Sigmoid colon (tissue), 7 donors: ENCODE measurements at regions of chr4 and their contacts with region 1.

Region 1: GRCh38 chr4:158850800-158851644 is 82.2 kb downstream of the FNIP2 start:
- DNase-seq: no peak
- H3K4me3 ChIP-seq: no peak overlapping the region
- H3K27ac ChIP-seq: no peak overlapping the region
- H3K4me1 ChIP-seq: peaks cover 0 to 7% (median 2%) of the 10 kb centered on the region in 4 donors
- H3K27me3 ChIP-seq: no peaks in the 10 kb centered on the region
- CTCF ChIP-seq: peak; percentile 37 to 68 (median 59)
- EP300 ChIP-seq: no peak
- POLR2A ChIP-seq: no peak

Region 2: GRCh38 chr4:158729716-158730559 is 121.1 kb before region 1 on chr4:
- intact Hi-C with region 1: loop called (anchors 1 kb)
- DNase-seq: peak; percentile 77
- H3K4me3 ChIP-seq: no peak overlapping the region
- H3K27ac ChIP-seq: no peak overlapping the region
- H3K4me1 ChIP-seq: peaks cover 0 to 4% (median 0%) of the 10 kb centered on the region in 4 donors
- H3K27me3 ChIP-seq: no peaks in the 10 kb centered on the region
- CTCF ChIP-seq: peak; percentile 87 to 95 (median 92)
- EP300 ChIP-seq: no peak
- POLR2A ChIP-seq: no peak